Posterior vena cava (tissue), 2 donors: ENCODE measurements at regions of chr7 and their contacts with region 1.

Region 1: GRCh38 chr7:37234928-37235327 is 213.7 kb downstream of the ELMO1 start:
- DNase-seq: no peak

Region 2: DNA sequence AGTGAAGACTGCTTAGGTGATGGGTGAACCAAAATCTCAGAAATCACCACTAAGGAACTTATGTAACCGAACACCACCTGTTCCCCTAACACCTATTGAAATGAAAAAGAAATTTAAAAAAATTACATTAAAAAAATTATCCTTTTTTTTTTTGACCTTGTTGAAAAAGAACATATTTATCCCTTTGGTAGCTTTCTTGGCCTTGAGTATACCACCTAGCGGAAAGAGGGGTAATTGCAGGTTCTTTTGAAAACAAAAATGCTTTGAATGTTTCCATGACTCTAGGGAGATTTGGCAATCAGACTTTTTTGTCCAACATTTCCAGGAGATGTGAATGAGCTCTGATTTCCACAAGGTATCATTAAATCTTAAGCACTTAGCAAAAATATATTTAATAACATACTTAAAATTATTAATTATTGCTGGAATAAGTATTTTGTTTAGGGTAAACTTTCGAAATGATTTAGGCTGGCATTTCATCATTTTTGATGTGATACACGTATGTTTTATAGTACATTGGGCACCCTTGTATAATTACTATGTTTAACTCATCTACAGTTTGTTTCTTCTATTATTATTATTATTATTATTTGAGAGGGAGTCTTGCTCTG is 260.8 kb after region 1 on chr7:
- intact Hi-C with region 1: loop called in 1 of 2 experiments (anchors 10 kb)
- DNase-seq: no peak